Mammary epithelial cell (primary cell): ENCODE measurements at regions of chr15 and their contacts with region 1.

Region 1: GRCh38 chr15:38440353-38441129 is 13.4 kb upstream of the FAM98B start:
- DNase-seq: peak; percentile 46
- H3K4me3 ChIP-seq: no peak overlapping the region
- H3K27ac ChIP-seq: no peak overlapping the region
- H3K4me1 ChIP-seq: no peaks in the 10 kb centered on the region
- H3K27me3 ChIP-seq: no peaks in the 10 kb centered on the region
- CTCF ChIP-seq: peak; percentile 93 to 95

Region 2: GRCh38 chr15:38294126-38294525 is 146.4 kb before region 1 on chr15:
- CTCF ChIA-PET with region 1: no interaction called
- dilution Hi-C with region 1: no loop called
- in situ Hi-C with region 1: no loop called
- intact Hi-C with region 1: no loop called
- DNase-seq: no peak
- H3K4me3 ChIP-seq: no peak overlapping the region
- H3K27ac ChIP-seq: no peak overlapping the region
- H3K4me1 ChIP-seq: no peaks in the 10 kb centered on the region
- H3K27me3 ChIP-seq: no peaks in the 10 kb centered on the region
- CTCF ChIP-seq: no peak

Region 3: GRCh38 chr15:38406436-38406835 is 34.1 kb before region 1 on chr15:
- CTCF ChIA-PET with region 1: no interaction called
- dilution Hi-C with region 1: no loop called
- in situ Hi-C with region 1: no loop called
- intact Hi-C with region 1: no loop called
- DNase-seq: no peak
- H3K4me3 ChIP-seq: no peak overlapping the region
- H3K27ac ChIP-seq: no peak overlapping the region
- H3K4me1 ChIP-seq: no peaks in the 10 kb centered on the region
- H3K27me3 ChIP-seq: peaks cover 7% of the 10 kb centered on the region
- CTCF ChIP-seq: no peak

Region 4: GRCh38 chr15:38647683-38648082 is 207.1 kb after region 1 on chr15:
- CTCF ChIA-PET with region 1: no interaction called
- dilution Hi-C with region 1: no loop called
- in situ Hi-C with region 1: no loop called
- intact Hi-C with region 1: loop called (anchors 1 kb)
- DNase-seq: peak; percentile 56
- H3K4me3 ChIP-seq: peak overlapping the region in 1 of 3 experiments; percentile 15
- H3K27ac ChIP-seq: peak overlapping the region; percentile 5
- H3K4me1 ChIP-seq: peaks cover 28% of the 10 kb centered on the region
- H3K27me3 ChIP-seq: no peaks in the 10 kb centered on the region
- CTCF ChIP-seq: peak; percentile 72 to 74

Region 5: DNA sequence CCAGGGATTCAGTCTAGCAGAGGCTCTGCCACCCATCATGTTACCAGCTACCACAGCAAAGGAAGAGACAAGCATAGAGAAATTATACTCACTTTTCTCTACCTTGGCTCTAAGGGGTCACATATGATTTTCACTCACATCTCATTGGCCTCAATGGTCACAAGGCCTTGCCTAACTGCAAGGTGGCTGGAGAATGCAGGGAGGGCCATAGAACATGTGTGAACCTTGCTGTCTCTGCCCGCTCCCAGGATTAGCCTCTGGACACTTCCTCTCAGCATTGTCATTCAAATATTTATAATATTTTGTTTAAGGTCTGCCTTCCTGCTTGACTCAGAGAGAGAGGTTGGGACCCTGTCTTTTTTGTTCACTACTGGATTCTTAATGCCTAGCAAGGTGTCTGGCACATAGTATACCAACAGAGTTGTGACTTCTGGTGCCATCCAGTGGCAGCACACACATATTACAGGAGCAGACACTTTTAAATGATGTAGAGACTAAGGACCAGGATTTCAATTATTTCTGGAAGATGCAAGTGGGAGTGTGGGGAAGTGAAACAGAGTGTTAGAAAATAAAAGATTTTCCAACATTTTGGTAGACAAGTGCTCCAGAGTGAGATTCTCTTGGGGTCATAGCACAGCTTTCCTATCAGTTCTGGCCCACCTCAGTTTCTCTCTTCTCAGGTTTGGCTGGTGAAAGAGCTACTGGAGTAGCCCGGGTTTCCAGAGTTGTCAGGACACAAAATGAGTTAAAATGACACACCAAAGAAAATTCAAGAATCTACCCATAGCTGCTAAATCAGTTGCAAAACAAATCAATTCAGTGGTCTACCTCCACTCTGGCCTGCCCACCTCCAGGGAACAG is 243.1 kb after region 1 on chr15:
- CTCF ChIA-PET with region 1: interaction called, 3 read pairs
- dilution Hi-C with region 1: no loop called
- in situ Hi-C with region 1: loop called in 1 of 2 experiments (anchors 25 kb)
- intact Hi-C with region 1: loop called (anchors 1 kb)
- DNase-seq: peak; percentile 32
- H3K4me3 ChIP-seq: no peak overlapping the region
- H3K27ac ChIP-seq: no peak overlapping the region
- H3K4me1 ChIP-seq: peaks cover 4% of the 10 kb centered on the region
- H3K27me3 ChIP-seq: no peaks in the 10 kb centered on the region
- CTCF ChIP-seq: peak; percentile 86 to 89

Region 6: GRCh38 chr15:38699633-38700230 is 259.2 kb after region 1 on chr15:
- CTCF ChIA-PET with region 1: interaction called, 12 read pairs
- dilution Hi-C with region 1: no loop called
- in situ Hi-C with region 1: loop called (anchors 10 to 25 kb)
- intact Hi-C with region 1: loop called (anchors 1 kb)
- DNase-seq: peak; percentile 45
- H3K4me3 ChIP-seq: no peak overlapping the region
- H3K27ac ChIP-seq: no peak overlapping the region
- H3K4me1 ChIP-seq: peaks cover 6% of the 10 kb centered on the region
- H3K27me3 ChIP-seq: no peaks in the 10 kb centered on the region
- CTCF ChIP-seq: peak; percentile 91 to 94